ENCODE measurements at regions of chr22 and their contacts with region 1.

Region 1: GRCh38 chr22:22884010-22884887 is 3.4 kb upstream of the IGLL5 start:
- DNase-seq: peak; percentile 85
- ATAC-seq: peak; percentile 90
- H3K4me3 Mint-ChIP-seq: no peak overlapping the region
- H3K27ac Mint-ChIP-seq: no peak overlapping the region
- H3K4me1 Mint-ChIP-seq: peaks cover 19% of the 10 kb centered on the region
- H3K27me3 Mint-ChIP-seq: peaks cover 28% of the 10 kb centered on the region

Region 2: GRCh38 chr22:22720201-22720723 is 164.0 kb before region 1 on chr22:
- CTCF ChIA-PET with region 1: interaction called, 10 read pairs
- POLR2A ChIA-PET with region 1: no interaction called
- DNase-seq: peak; percentile 68
- ATAC-seq: peak; percentile 85
- H3K4me3 Mint-ChIP-seq: no peak overlapping the region
- H3K27ac Mint-ChIP-seq: peak overlapping the region; percentile 42
- H3K4me1 Mint-ChIP-seq: peaks cover 30% of the 10 kb centered on the region
- H3K27me3 Mint-ChIP-seq: peaks cover 16% of the 10 kb centered on the region

Region 3: GRCh38 chr22:22770280-22770871 is 113.9 kb before region 1 on chr22:
- CTCF ChIA-PET with region 1: interaction called, 63 read pairs
- POLR2A ChIA-PET with region 1: no interaction called
- DNase-seq: peak; percentile 59
- ATAC-seq: peak; percentile 69
- H3K4me3 Mint-ChIP-seq: no peak overlapping the region
- H3K27ac Mint-ChIP-seq: no peak overlapping the region
- H3K4me1 Mint-ChIP-seq: no peaks in the 10 kb centered on the region
- H3K27me3 Mint-ChIP-seq: peaks cover 18% of the 10 kb centered on the region

Region 4: DNA sequence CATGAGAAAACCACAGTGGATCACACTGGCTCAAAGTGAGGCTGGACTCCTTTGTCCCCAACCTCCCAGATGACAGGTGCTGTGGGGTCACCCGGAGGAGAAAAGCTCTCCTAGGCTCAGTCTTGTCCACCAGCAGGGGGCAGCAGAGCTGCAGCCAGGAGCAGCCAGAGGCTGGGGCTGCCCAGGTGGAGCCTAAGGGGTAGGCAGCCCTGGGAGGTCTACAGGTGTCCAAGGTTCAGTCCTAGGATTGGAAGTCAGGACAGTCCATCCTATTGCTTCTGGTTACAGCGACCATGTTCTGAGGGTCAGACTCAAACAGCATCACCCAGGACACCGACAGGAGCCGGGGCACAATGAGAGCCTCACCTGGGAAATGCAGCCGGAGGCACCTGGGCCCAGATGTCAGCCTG is 74.2 kb before region 1 on chr22:
- CTCF ChIA-PET with region 1: interaction called, 256 read pairs
- POLR2A ChIA-PET with region 1: no interaction called
- DNase-seq: peak; percentile 75
- ATAC-seq: peak; percentile 88
- H3K4me3 Mint-ChIP-seq: no peak overlapping the region
- H3K27ac Mint-ChIP-seq: no peak overlapping the region
- H3K4me1 Mint-ChIP-seq: peaks cover 5% of the 10 kb centered on the region
- H3K27me3 Mint-ChIP-seq: peaks cover 24% of the 10 kb centered on the region

Region 5: DNA sequence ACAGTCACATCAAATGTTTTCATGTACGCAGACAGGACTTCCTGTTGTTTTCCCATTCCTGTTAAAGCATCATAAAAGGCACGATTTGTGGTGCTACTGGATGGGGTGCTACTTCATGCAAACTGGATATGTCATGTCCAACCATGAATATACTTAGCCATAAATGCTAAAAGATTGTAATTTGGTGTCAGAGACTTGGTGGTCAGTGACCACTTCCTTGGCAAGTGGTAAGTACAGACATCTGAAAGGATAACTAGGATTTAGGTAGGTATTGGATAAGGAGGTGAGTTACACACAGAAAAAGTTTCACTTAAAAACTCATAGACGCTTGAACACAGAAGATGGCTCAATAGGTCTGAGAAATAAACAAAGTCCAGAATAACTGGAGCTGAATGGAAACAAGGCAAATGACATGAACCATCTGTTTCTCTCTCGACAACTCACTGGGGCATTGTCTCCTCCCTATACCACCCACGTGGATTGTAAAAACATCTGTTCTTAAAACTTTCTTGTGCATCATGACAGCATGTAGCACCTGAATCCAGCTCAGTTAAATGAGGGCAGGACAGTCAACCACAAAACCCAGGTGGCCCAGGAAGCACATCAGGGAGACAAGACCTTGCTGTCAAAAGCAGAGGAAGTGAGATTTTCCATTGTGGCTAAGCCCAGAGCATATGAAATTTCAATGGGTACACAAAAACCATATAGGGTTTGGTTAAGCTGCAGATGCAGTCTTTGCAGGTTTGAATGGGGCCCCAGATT is 18.8 kb before region 1 on chr22:
- CTCF ChIA-PET with region 1: interaction called, 14 read pairs
- POLR2A ChIA-PET with region 1: interaction called, 4 read pairs
- DNase-seq: peak; percentile 62
- ATAC-seq: peak; percentile 84
- H3K4me3 Mint-ChIP-seq: no peak overlapping the region
- H3K27ac Mint-ChIP-seq: peak overlapping the region; percentile 8
- H3K4me1 Mint-ChIP-seq: peaks cover 32% of the 10 kb centered on the region
- H3K27me3 Mint-ChIP-seq: peaks cover 45% of the 10 kb centered on the region

Region 6: DNA sequence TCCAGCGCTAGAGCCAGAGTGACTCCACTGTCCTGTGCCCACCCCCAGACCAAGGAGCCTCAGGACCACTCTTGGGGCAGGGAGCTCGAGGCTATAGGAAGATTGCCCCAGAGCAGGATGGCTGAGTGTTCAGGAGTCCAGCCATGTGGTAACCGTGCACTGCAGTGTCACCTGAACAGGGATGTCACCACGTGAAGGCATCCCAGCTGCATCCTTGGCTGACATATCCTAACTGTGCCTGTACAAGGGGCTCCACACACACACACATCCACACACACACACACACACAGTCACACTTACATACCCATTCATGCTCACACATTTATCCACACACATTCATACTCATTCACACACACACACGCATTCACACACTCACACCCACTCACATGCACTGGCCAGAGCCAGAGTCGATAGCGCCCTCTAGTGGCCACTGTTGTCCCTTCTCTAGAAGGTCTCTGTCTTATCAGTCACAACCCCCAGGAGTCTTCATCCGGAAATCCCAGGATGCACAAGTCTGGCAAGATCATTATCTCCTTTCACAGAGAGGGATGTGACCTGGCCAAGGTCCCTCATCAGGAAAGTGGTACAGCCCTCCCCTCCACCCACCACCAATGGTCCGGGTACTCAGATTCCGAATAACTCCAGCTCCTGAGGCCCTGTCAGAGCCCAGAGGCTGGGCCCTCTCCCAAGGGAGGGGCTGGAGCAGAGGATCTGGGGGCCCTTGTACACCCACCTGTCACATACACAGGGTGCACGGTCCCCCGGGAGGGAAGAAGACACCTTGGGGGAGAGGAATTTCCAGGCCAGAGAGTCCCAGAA is 58.5 kb after region 1 on chr22:
- CTCF ChIA-PET with region 1: interaction called, 19 read pairs
- POLR2A ChIA-PET with region 1: no interaction called
- DNase-seq: peak; percentile 85
- ATAC-seq: peak; percentile 89
- H3K4me3 Mint-ChIP-seq: no peak overlapping the region
- H3K27ac Mint-ChIP-seq: no peak overlapping the region
- H3K4me1 Mint-ChIP-seq: no peaks in the 10 kb centered on the region
- H3K27me3 Mint-ChIP-seq: peaks cover 21% of the 10 kb centered on the region

Measured in activated CD8-positive, alpha-beta T cell treated with anti-CD3 and anti-CD28 coated beads, Interleukin-2, amount 10 ng/mL, durations not matched to agents 7 days and 5 days (primary cell).